Activated CD4-positive, alpha-beta T cell treated with anti-CD3 and anti-CD28 coated beads, Interleukin-2, amount 10 ng/mL, durations not matched to agents 24 days and 14 days (primary cell): ENCODE measurements at regions of chr12 and their contacts with region 1.

Region 1: GRCh38 chr12:54993161-54993835 is 8.7 kb upstream of the TESPA1 start:
- DNase-seq: peak; percentile 87
- H3K4me3 Mint-ChIP-seq: no peak overlapping the region
- H3K27ac Mint-ChIP-seq: no peak overlapping the region
- H3K4me1 Mint-ChIP-seq: peaks cover 36% of the 10 kb centered on the region
- H3K27me3 Mint-ChIP-seq: no peaks in the 10 kb centered on the region

Region 2: DNA sequence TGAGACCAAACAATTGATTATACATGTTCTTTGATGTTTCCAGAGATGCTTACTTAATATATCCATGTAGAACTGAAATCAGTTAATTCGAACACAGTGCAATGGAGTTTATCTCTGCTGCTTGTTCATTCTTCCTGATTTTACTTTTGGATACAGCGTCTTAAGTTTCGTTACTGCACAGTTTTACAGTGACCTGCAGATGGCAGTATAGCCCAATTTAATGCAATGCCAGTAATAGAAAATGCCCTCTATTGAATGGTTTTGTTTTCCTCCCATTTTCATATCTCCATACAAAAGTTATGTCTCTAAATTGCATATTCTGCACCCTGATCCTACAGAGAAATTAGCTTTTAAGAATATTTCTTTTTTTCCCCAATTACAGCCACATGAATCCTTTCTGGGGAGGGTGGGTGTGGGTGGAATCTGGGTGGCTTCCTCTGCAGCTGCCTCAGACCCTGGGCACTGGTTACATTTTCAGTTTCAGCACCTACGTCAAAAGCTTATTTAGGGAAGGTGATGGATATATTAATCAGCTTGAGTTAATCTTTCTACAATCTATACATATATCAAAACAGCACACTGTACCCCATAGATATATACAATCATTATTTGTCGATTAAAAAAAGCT is 244.0 kb before region 1 on chr12:
- intact Hi-C with region 1: loop called (anchors 1 kb)
- DNase-seq: peak; percentile 84
- H3K4me3 Mint-ChIP-seq: peak overlapping the region; percentile 41
- H3K27ac Mint-ChIP-seq: no peak overlapping the region
- H3K4me1 Mint-ChIP-seq: peaks cover 16% of the 10 kb centered on the region
- H3K27me3 Mint-ChIP-seq: peaks cover 20% of the 10 kb centered on the region

Region 3: GRCh38 chr12:54853995-54854566 is 139.2 kb before region 1 on chr12 and contains the start of gene MUCL1:
- intact Hi-C with region 1: loop called (anchors 1 kb)
- DNase-seq: peak; percentile 93
- H3K4me3 Mint-ChIP-seq: no peak within 1 kb of the TSS
- H3K27ac Mint-ChIP-seq: no peak within 1 kb of the TSS
- H3K4me1 Mint-ChIP-seq: peaks cover 20% of the 10 kb centered on the region
- H3K27me3 Mint-ChIP-seq: peaks cover 5% of the 10 kb centered on the region
- total RNA-seq, gene MUCL1: 0.54 and 0.84 TPM in 2 replicates

Region 4: GRCh38 chr12:54935235-54935951 is 57.9 kb before region 1 on chr12:
- intact Hi-C with region 1: loop called (anchors 1 kb)
- DNase-seq: peak; percentile 83
- H3K4me3 Mint-ChIP-seq: peak overlapping the region; percentile 56
- H3K27ac Mint-ChIP-seq: peak overlapping the region; percentile 92
- H3K4me1 Mint-ChIP-seq: peaks cover 50% of the 10 kb centered on the region
- H3K27me3 Mint-ChIP-seq: no peaks in the 10 kb centered on the region

Region 5: DNA sequence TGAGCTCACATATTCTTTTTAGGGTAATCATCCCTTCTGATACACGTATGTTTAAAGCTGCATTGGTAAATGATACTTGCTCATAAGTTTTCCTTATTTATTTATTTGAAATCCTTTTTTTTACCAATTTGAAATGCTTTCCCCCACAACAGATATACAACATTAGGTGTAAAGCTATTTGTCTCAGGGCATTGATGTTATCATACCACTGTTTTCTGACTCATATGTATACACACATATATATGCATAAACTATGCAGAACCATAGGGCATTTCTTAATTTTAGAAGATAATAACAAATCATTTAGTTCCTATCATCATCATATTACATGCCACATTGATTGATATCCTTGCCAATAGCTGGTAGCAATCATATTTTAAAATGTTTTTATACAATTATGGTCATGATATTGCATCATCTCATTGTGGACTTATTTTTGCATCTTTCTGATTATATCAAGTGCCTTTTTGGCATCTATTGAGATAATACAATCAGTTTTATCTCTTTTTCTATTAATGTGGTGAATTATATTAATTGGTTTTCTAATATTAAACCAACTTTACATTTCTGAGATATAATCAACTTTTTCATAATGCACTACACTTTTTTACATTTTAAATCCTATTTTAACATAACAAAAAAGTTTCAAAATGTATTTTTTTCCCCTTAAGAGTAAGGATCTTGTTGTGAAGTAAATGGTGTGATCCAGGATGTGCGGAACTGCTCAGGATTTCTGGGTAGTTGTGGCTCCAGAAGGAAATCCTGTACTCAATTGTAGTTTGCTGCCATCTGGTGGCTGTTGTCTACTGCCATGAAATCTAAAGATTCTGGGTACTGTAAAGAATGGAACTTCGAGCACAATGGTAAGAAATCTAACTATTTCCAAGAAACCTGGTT is 149.6 kb after region 1 on chr12:
- intact Hi-C with region 1: loop called (anchors 1 kb)
- DNase-seq: peak; percentile 79
- H3K4me3 Mint-ChIP-seq: no peak overlapping the region
- H3K27ac Mint-ChIP-seq: no peak overlapping the region
- H3K4me1 Mint-ChIP-seq: no peaks in the 10 kb centered on the region
- H3K27me3 Mint-ChIP-seq: peaks cover 29% of the 10 kb centered on the region